ENCODE measurements at regions of chr11 and their contacts with region 1.

Region 1: DNA sequence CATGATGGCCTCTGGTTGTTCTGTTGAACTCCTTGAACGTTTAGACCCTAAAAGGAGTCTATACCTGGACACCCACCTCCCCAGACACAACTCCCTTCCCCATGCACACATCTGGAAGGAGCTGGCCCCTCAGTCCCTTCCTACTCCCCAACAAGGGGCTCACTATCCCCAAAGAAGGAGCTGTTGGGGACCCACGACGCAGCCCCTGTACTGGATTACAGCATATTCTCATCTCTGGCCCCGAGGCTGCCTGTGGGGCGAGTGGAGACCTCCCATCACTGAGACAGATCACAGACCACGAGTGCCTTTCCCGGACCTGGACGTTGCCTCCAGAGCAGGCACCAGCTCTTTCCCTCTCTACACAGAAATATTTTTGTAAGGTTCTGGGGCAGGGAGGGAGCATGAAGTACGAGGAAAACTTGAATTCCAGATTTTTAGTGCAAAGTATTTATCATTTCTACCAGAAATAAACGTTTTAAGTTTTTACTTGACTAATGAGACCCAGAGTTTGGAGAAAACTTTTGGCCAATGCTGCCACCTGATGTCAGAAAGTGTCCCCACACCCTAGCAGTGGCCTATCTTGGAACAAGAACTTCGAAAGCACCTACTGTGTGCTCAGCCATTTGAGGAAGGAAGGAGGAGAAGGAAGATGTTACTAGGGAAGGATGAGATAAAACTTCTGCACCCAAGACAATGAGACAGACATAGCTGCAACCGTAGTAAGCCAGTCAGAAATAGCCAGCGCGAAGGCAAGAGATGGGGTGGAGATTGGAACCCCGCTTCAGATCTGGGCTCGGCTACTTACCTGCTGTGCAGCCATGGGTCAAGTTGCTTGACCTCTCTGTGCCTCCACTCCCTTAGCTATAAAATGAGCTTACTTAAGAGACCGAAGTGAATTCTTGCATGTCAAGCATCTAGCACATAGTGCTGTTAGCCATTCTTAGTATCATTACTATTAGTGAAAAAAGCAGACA is 10.2 kb upstream of the POU2F3 start:
- DNase-seq: no peak
- H3K4me3 ChIP-seq: no peak overlapping the region
- H3K27me3 ChIP-seq: peaks cover 6% of the 10 kb centered on the region; the same call in 1 of the 2 replicates
- CTCF ChIP-seq: peak; percentile 64

Region 2: DNA sequence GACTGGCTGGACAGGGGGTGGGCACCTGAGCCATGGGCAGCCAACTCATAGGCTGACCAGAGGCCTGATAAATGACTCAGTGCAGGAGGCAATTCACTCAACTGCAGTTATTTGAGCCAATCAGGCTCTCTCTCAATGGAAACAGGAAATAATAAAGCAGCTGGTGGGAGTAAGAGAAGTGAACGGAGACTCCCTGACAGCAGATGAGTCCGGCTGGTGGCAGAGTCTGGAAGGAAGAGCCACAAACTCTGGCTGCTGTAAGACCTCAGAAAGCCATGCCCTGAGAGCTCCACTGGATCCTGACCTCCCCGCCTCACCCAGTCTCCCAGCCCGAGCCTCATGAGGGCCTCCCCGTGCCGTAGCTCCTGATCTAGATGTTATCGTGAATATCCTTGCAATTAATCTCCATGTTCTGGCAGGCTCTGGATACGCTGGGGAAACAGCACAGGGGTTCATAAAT is 161.6 kb before region 1 on chr11:
- CTCF ChIA-PET with region 1: no interaction called
- POLR2A ChIA-PET with region 1: no interaction called
- DNase-seq: peak; percentile 15
- H3K4me3 ChIP-seq: no peak overlapping the region
- H3K27me3 ChIP-seq: peaks cover 11% of the 10 kb centered on the region
- CTCF ChIP-seq: no peak

Region 3: DNA sequence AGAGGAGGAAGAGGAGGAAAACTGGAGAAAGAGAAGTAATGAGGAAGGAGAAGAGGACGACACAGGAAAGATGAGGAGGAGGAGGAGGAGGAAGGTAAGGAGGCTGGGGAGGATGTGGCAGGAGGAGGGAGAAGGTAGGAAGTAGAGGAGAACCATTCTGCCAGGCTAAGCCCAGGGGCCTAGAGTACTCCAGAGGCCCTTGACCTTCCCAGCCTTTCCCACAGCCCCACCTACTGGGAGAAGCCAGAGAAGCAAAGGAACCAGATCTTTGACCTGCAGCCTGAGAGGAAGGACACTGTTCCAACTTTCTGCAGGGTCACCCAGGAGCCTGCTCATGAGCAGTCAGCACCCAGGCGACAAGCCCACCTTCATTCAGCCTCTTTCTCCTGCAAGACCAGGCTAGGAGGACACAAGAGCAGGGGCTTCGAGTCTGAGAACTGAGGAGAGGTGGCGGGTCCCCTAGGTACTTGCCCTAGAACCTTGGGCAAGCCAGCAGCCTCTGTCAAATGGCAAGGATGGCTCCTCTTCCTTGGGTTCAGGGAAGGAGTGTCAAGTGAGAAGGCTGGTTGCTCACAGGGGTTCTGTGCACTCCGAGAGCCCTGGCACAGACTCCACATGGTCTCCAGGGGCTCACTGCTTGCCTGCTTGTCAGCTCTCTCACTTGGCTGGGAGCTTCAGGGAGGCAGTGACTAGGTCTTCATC is 46.8 kb before region 1 on chr11:
- CTCF ChIA-PET with region 1: interaction called, 37 read pairs
- POLR2A ChIA-PET with region 1: no interaction called
- DNase-seq: no peak
- H3K4me3 ChIP-seq: no peak overlapping the region
- H3K27me3 ChIP-seq: peaks cover 2% of the 10 kb centered on the region
- CTCF ChIP-seq: peak; percentile 44; the same call in 1 of the 2 replicates

Region 4: DNA sequence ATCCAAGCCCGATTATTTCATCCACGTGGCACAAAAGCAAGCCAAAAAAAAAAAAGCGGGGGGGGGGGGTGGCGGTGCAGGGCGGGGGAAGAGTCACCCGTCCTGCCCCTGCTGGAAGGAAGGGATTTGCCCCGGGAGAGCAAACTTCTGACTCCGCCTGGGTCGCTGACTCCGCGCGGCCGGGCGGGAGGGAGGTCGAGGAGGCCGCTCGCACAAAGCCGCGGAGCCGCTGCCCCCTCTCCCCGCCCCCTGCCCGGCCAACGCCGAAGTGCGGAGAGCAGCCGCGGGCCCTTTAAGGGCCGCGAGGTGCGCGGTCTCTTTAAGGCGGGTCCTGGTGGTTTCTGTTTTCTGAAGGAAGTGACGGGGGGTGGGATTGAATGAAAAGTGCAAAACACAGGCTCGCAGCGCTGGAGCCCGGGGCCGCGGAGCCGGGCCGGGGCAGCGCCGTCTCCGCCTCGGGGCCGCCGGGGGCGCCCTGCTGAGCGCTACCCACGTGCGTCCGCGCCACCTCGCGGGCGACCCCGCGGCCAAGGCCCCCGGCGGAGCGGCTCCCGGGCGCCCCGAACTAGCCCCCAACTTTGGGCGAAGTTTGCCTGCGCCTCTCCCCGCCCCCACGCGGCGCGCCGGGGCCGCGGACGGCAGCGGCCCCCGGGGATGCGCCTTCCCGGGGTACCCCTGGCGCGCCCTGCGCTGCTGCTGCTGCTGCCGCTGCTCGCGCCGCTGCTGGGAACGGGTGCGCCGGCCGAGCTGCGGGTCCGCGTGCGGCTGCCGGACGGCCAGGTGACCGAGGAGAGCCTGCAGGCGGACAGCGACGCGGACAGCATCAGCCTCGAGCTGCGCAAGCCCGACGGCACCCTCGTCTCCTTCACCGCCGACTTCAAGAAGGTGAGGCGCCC is 18.9 kb before region 1 on chr11 and contains the start of gene OAF:
- CTCF ChIA-PET with region 1: interaction called, 14 read pairs
- POLR2A ChIA-PET with region 1: no interaction called
- DNase-seq: no peak
- H3K4me3 ChIP-seq: peak within 1 kb of the TSS; percentile 72
- H3K27me3 ChIP-seq: no peaks in the 10 kb centered on the region
- CTCF ChIP-seq: no peak
- polyA plus RNA-seq, gene OAF: 32.8 and 47.5 TPM in 2 replicates

Region 5: GRCh38 chr11:120248551-120249278 is 19.0 kb after region 1 on chr11:
- CTCF ChIA-PET with region 1: interaction called, 57 read pairs
- POLR2A ChIA-PET with region 1: no interaction called
- DNase-seq: no peak
- H3K4me3 ChIP-seq: no peak overlapping the region
- H3K27me3 ChIP-seq: peaks cover 27% of the 10 kb centered on the region
- CTCF ChIP-seq: no peak

Measured in BJ (cell line).